Naive thymus-derived CD8-positive, alpha-beta T cell (primary cell): ENCODE measurements at regions of chr2 and their contacts with region 1.

Region 1: DNA sequence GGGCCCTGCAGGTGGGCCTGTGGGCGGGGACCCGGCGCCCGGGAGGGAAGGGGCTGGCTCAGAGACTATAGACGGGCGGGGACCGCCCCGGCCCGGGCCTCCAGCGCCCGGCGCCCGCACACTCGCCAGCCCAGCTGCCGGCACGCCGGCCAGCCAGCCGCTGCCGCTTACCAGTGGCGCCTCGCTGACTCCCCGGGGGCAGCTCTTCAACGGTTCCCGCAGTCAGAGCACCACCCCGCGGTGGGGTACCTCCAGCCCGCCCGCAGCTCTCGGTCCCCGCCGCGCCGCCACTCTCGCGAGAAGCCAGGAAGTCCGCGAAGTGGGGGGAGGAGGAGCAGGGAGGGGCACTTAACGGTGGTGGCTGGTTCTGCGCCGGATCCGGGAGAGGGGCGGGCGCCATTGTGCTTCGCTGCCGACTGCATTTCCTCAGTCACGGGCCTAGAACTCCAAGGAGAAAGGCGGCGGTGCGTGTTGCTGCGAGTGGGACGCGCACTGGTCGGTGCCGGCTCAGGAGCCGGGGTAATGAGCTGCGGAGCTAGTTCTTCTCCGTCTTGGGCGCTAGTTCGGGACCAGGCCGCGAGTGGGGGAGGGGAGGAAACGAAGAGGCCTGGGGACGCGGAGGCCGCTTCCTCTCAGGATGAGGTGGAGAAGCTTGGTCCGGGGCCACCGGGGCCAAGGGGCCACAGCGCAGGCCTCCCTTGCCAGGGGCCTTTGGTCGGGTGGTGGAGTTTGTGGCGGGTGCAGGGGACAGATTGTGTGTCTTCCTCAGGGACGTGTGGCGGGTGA is at the start of gene MARCHF7:
- DNase-seq: peak; percentile 94 to 99 (median 98)
- ATAC-seq: peak; percentile 90 to 92
- H3K4me3 Mint-ChIP-seq: peak within 1 kb of the TSS; percentile 97 to 100 (median 100)
- H3K27ac Mint-ChIP-seq: peak within 1 kb of the TSS; percentile 94 to 100 (median 100)
- H3K4me1 Mint-ChIP-seq: peaks cover 20 to 65% (median 46%) of the 10 kb centered on the region in 4 donors
- H3K27me3 Mint-ChIP-seq: no peaks in the 10 kb centered on the region
- polyA plus RNA-seq, gene MARCHF7: 147 to 158 (median 157) TPM

Region 2: DNA sequence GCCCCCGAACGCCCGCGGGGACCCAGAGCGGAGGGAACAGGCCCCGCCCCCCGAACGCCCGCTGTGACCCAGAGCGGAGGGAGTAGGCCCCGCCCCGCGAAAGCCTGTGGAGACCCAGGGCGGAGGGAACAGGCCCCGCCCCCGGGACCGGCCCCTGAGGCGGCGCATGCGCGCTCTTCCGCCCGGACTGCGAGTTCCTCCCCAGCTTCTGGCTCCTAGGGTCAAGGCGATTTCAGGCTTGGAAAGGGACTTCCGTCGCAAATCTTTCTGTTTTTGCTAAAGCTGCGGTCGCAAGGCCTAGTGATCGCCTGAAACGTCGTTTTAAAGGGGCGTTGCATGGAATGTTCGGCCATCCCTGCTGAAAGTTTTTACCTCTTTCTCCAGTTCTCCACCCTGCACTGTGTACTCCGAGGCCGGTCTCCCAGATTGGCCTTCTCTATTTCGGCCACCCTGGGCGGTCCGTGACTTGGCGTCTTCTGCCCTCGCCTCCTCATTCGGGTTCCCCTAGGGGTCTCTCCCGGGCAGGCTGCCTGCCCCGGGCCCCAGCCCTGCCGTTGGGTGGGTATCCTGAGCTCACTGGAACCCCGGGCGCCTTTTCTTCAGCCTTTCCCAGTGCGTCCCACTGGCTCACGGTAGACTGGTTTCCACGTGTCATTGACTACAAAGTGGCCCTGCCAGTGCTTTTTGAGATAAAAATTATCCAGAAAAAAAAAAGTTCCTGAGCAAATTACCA is 425.5 kb before region 1 on chr2:
- POLR2A ChIA-PET with region 1: interaction called, 18 read pairs
- DNase-seq: peak; percentile 89 to 98 (median 96)
- ATAC-seq: peak; percentile 96
- H3K4me3 Mint-ChIP-seq: peak overlapping the region; percentile 79 to 94 (median 88)
- H3K27ac Mint-ChIP-seq: peak overlapping the region; percentile 67 to 95 (median 90)
- H3K4me1 Mint-ChIP-seq: peaks cover 6 to 49% (median 28%) of the 10 kb centered on the region in 4 donors
- H3K27me3 Mint-ChIP-seq: no peaks in the 10 kb centered on the region

Region 3: GRCh38 chr2:159516241-159516766 is 196.0 kb before region 1 on chr2:
- POLR2A ChIA-PET with region 1: interaction called, 17 read pairs
- DNase-seq: peak in 7 of 10 donors; percentile 7 to 72 (median 32)
- ATAC-seq: peak; percentile 94 to 98
- H3K4me3 Mint-ChIP-seq: peak overlapping the region; percentile 68 to 94 (median 88)
- H3K27ac Mint-ChIP-seq: peak overlapping the region; percentile 88 to 98 (median 94)
- H3K4me1 Mint-ChIP-seq: peaks cover 7 to 41% (median 18%) of the 10 kb centered on the region in 4 donors
- H3K27me3 Mint-ChIP-seq: peaks cover 0 to 3% (median 0%) of the 10 kb centered on the region in 5 donors

Region 4: DNA sequence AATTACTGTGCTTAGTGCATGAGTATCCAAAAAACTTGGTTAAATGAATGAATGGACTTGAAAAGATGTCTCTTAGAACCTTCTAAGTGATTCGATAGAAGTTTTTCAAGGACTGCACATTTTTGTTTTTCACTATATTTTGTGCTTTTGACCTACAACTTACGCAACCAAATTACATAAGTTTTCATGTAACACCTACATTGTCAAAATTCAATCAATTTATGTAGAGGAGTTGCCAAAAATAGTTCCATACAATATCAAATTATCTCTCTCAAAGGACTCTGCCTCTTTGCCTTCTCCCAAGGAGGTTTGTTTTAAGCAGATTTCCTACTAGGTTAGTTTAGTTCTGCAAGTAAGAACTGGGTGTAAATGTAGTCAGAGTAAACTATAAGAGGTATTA is 10.2 kb after region 1 on chr2:
- POLR2A ChIA-PET with region 1: interaction called, 10 read pairs
- DNase-seq: no peak
- ATAC-seq: no peak
- H3K4me3 Mint-ChIP-seq: peak overlapping the region in 7 of 10 donors; percentile 30 to 63 (median 46)
- H3K27ac Mint-ChIP-seq: peak overlapping the region in 3 of 10 donors; percentile 2 to 84 (median 43)
- H3K4me1 Mint-ChIP-seq: peaks cover 27 to 90% (median 89%) of the 10 kb centered on the region in 4 donors
- H3K27me3 Mint-ChIP-seq: no peaks in the 10 kb centered on the region

Region 5: DNA sequence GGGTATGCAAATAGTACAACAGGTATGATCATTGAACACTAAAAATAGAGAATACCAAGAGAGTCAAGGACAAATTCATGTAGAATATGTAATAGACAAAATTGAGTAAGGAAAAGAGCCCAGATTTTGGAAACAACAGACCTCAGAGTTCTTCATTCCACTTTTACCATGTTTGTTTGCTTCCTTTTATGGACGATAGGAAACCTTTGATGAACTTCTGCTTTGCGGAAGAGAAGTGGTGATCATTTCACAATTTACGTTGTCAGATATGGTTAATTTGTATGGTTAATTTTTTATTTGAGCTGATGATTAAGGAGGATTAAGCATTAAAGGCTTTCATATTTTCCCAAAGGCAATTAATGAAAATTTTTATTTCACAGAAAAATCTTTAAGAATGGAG is 16.3 kb after region 1 on chr2:
- POLR2A ChIA-PET with region 1: interaction called, 16 read pairs
- DNase-seq: no peak
- ATAC-seq: no peak
- H3K4me3 Mint-ChIP-seq: peak overlapping the region in 2 of 10 donors; percentile 10 to 22
- H3K27ac Mint-ChIP-seq: peak overlapping the region in 6 of 10 donors; percentile 1 to 55 (median 10)
- H3K4me1 Mint-ChIP-seq: peaks cover 15 to 69% (median 52%) of the 10 kb centered on the region in 4 donors
- H3K27me3 Mint-ChIP-seq: no peaks in the 10 kb centered on the region

Region 6: GRCh38 chr2:159904127-159904958 is 192.0 kb after region 1 on chr2:
- POLR2A ChIA-PET with region 1: interaction called, 18 read pairs
- DNase-seq: peak; percentile 78 to 91 (median 84)
- ATAC-seq: peak; percentile 79 to 83
- H3K4me3 Mint-ChIP-seq: peak within 1 kb of the TSS; percentile 94 to 100 (median 100)
- H3K27ac Mint-ChIP-seq: peak within 1 kb of the TSS; percentile 98 to 100 (median 99)
- H3K4me1 Mint-ChIP-seq: peaks cover 25 to 45% (median 41%) of the 10 kb centered on the region in 4 donors
- H3K27me3 Mint-ChIP-seq: no peaks in the 10 kb centered on the region